ENCODE measurements at regions of chr20 and their contacts with region 1.

Region 1: GRCh38 chr20:10034717-10035571 is at the start of gene ANKEF1:
- DNase-seq: peak; percentile 92 to 95 (median 93)
- ATAC-seq: peak; percentile 97
- H3K4me3 ChIP-seq: peak within 1 kb of the TSS; percentile 34 to 43
- H3K27ac ChIP-seq: peak within 1 kb of the TSS; percentile 70 to 94 (median 87)
- H3K4me1 ChIP-seq: peaks cover 53% of the 10 kb centered on the region
- H3K27me3 ChIP-seq: no peaks in the 10 kb centered on the region
- CTCF ChIP-seq: peak in 2 of 7 experiments; percentile 11 to 28
- POLR2A ChIP-seq: peak; percentile 52 to 88 (median 85)
- total RNA-seq, gene ANKEF1: 5.9 to 6.2 TPM

Region 2: GRCh38 chr20:10079964-10080363 is 45.0 kb after region 1 on chr20:
- intact Hi-C with region 1: loop called (anchors 10 kb)
- DNase-seq: peak in 1 of 4 donors; percentile 41
- ATAC-seq: peak; percentile 49
- H3K4me3 ChIP-seq: no peak overlapping the region
- H3K27ac ChIP-seq: peak overlapping the region in 3 of 4 donors; percentile 1 to 75 (median 3)
- H3K4me1 ChIP-seq: peaks cover 56% of the 10 kb centered on the region
- H3K27me3 ChIP-seq: no peaks in the 10 kb centered on the region
- CTCF ChIP-seq: no peak
- POLR2A ChIP-seq: no peak

Measured in body of pancreas (tissue), 4 donors.